ENCODE measurements at regions of chr18 and their contacts with region 1.

Region 1: GRCh38 chr18:54679318-54680149 is 88.5 kb downstream of the DYNAP start:
- DNase-seq: no peak
- H3K4me3 ChIP-seq: no peak overlapping the region
- CTCF ChIP-seq: no peak
- POLR2A ChIP-seq: no peak

Region 2: DNA sequence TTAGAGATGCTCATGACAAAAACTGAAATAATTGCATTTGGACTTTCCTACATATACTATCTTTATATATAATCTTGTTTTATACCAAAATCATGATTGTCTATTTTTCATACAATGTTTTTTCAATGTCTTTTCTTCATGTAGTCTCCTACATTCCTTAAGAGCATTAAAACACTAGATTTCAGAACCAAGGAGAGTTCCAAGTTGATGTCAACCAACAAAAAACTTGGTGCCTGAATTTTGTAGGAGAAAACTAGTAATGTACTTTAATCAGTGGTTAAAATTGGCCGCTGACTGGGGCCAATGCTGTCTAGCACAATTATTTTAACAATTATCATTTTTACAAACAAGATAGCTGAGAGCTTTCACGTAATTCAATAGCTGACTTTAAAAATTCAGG is 1660.7 kb before region 1 on chr18:
- intact Hi-C with region 1: no loop called
- DNase-seq: no peak
- H3K4me3 ChIP-seq: no peak overlapping the region
- CTCF ChIP-seq: no peak
- POLR2A ChIP-seq: no peak

Region 3: DNA sequence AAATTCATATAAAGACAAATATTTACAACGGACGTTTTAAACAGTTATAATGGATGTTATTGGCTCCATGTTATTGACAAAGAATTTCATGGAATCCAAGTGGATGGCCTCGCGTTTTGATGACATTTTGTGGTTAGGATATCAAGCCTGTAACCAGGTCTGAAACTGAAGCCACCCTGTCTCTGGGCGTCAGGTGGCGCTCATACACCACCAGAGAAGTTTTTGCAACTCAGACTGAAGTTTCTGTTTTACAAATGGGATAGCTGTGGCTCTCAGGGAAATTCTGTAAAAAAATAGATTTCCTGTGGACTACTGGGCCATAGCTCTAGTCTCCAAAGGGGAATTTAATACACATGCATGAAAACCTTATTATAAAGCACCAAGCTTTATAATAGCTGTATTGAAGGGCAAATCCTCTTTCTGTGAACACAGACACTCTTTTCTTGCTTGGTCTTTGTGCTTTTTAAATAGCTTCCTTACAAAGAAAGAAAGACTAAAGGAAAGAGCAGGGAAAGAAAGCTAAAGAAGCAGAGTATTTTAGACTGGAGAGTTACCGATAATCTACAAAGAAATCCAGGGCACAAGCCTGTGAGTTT is 235.1 kb before region 1 on chr18:
- intact Hi-C with region 1: loop called (anchors 10 kb)
- DNase-seq: no peak
- H3K4me3 ChIP-seq: no peak overlapping the region
- CTCF ChIP-seq: no peak
- POLR2A ChIP-seq: no peak

Region 4: GRCh38 chr18:54616220-54616848 is 63.2 kb before region 1 on chr18:
- intact Hi-C with region 1: no loop called
- DNase-seq: no peak
- H3K4me3 ChIP-seq: no peak overlapping the region
- CTCF ChIP-seq: no peak
- POLR2A ChIP-seq: no peak

Region 5: GRCh38 chr18:54983041-54983686 is 303.6 kb after region 1 on chr18:
- intact Hi-C with region 1: loop called (anchors 10 kb)
- DNase-seq: no peak
- H3K4me3 ChIP-seq: no peak overlapping the region
- CTCF ChIP-seq: no peak
- POLR2A ChIP-seq: no peak